Naive thymus-derived CD4-positive, alpha-beta T cell (primary cell): ENCODE measurements at regions of chr7 and their contacts with region 1.

Region 1: GRCh38 chr7:96837593-96837992 is 127.9 kb upstream of the SEM1 start:
- DNase-seq: peak in 8 of 9 donors; percentile 22 to 81 (median 70)
- ATAC-seq: peak; percentile 91
- H3K4me3 ChIP-seq: no peak overlapping the region
- H3K4me3 Mint-ChIP-seq: peak overlapping the region; percentile 5 to 85 (median 76)
- H3K27ac ChIP-seq: no peak overlapping the region
- H3K27ac Mint-ChIP-seq: peak overlapping the region in 4 of 9 donors; percentile 6 to 60 (median 28)
- H3K4me1 ChIP-seq: peaks cover 16 to 26% of the 10 kb centered on the region in 2 donors
- H3K4me1 Mint-ChIP-seq: peaks cover 21 to 46% (median 35%) of the 10 kb centered on the region in 7 donors
- H3K27me3 ChIP-seq: no peaks in the 10 kb centered on the region
- H3K27me3 Mint-ChIP-seq: peaks cover 17 to 58% (median 41%) of the 10 kb centered on the region in 5 donors

Region 2: GRCh38 chr7:96899108-96899507 is 61.5 kb after region 1 on chr7:
- CTCF ChIA-PET with region 1: no interaction called
- POLR2A ChIA-PET with region 1: no interaction called
- intact Hi-C with region 1: loop called in 1 of 2 experiments (anchors 10 kb)
- DNase-seq: no peak
- ATAC-seq: no peak
- H3K4me3 ChIP-seq: no peak overlapping the region
- H3K4me3 Mint-ChIP-seq: no peak overlapping the region
- H3K27ac ChIP-seq: no peak overlapping the region
- H3K27ac Mint-ChIP-seq: no peak overlapping the region
- H3K4me1 ChIP-seq: no peaks in the 10 kb centered on the region
- H3K4me1 Mint-ChIP-seq: no peaks in the 10 kb centered on the region
- H3K27me3 ChIP-seq: no peaks in the 10 kb centered on the region
- H3K27me3 Mint-ChIP-seq: peaks cover 4 to 32% (median 11%) of the 10 kb centered on the region in 5 donors